Prostate gland (tissue), 2 donors: ENCODE measurements at regions of chr16 and their contacts with region 1.

Region 1: GRCh38 chr16:68396481-68396880 is 51.8 kb downstream of the SMPD3 start:
- DNase-seq: peak; percentile 50
- H3K4me3 ChIP-seq: no peak overlapping the region
- H3K27ac ChIP-seq: no peak overlapping the region
- H3K4me1 ChIP-seq: no peaks in the 10 kb centered on the region
- H3K27me3 ChIP-seq: no peaks in the 10 kb centered on the region
- CTCF ChIP-seq: peak; percentile 54 to 89 (median 78)
- POLR2A ChIP-seq: no peak

Region 2: GRCh38 chr16:67191995-67192681 is 1204.3 kb before region 1 on chr16 and contains the start of gene E2F4:
- intact Hi-C with region 1: no loop called
- DNase-seq: peak; percentile 89
- H3K4me3 ChIP-seq: peak within 1 kb of the TSS; percentile 88 to 91
- H3K27ac ChIP-seq: peak within 1 kb of the TSS; percentile 35 to 41
- H3K4me1 ChIP-seq: peaks cover 17% of the 10 kb centered on the region
- H3K27me3 ChIP-seq: no peaks in the 10 kb centered on the region
- CTCF ChIP-seq: peak in 2 of 4 experiments; percentile 30 to 40
- POLR2A ChIP-seq: peak; percentile 22
- total RNA-seq, gene E2F4: 91.6 to 105 TPM

Region 3: GRCh38 chr16:68166264-68166663 is 230.2 kb before region 1 on chr16:
- intact Hi-C with region 1: no loop called
- DNase-seq: no peak
- H3K4me3 ChIP-seq: no peak overlapping the region
- H3K27ac ChIP-seq: no peak overlapping the region
- H3K4me1 ChIP-seq: no peaks in the 10 kb centered on the region
- H3K27me3 ChIP-seq: no peaks in the 10 kb centered on the region
- CTCF ChIP-seq: no peak
- POLR2A ChIP-seq: no peak

Region 4: DNA sequence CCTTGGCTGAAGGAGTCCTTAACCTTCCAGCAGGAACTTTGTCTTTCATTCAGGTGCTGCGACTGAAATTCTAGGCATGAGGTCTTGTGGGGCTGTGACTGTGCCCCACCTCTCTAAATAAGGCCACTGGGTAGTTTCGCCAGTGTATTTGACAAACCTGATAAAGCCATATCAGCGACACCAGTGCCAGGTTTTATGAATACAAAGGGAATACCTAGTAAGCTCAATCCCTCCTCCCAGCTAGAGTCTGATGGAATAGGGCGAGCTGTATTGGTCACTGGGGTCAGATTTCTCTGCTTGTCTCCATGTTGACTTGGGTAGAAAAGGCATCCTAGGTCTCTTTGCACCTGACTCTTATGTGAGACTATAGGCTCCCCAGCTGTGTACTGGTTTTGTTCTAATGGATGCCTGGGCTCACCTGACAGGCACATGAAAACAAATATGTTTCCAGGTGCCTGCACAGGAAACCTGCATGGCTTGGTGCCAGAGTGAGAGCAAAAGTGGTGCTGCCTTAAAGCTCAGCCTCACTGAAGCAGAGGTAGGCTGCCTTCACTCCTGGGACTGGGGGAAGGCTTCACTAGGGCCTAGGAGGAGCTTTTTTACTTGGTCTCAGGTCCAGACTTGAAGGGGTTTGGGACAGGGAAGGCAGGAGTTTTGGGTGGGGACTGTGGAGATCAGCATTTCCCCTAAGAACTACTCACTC is 123.8 kb before region 1 on chr16:
- intact Hi-C with region 1: no loop called
- DNase-seq: peak; percentile 20
- H3K4me3 ChIP-seq: no peak overlapping the region
- H3K27ac ChIP-seq: no peak overlapping the region
- H3K4me1 ChIP-seq: peaks cover 2% of the 10 kb centered on the region
- H3K27me3 ChIP-seq: no peaks in the 10 kb centered on the region
- CTCF ChIP-seq: no peak
- POLR2A ChIP-seq: no peak

Region 5: GRCh38 chr16:68452176-68452575 is 55.7 kb after region 1 on chr16:
- intact Hi-C with region 1: no loop called
- DNase-seq: no peak
- H3K4me3 ChIP-seq: no peak overlapping the region
- H3K27ac ChIP-seq: no peak overlapping the region
- H3K4me1 ChIP-seq: peaks cover 8% of the 10 kb centered on the region
- H3K27me3 ChIP-seq: no peaks in the 10 kb centered on the region
- CTCF ChIP-seq: no peak
- POLR2A ChIP-seq: no peak

Region 6: GRCh38 chr16:68503334-68503733 is 106.9 kb after region 1 on chr16:
- intact Hi-C with region 1: loop called (anchors 10 kb)
- DNase-seq: no peak
- H3K4me3 ChIP-seq: no peak overlapping the region
- H3K27ac ChIP-seq: no peak overlapping the region
- H3K4me1 ChIP-seq: no peaks in the 10 kb centered on the region
- H3K27me3 ChIP-seq: no peaks in the 10 kb centered on the region
- CTCF ChIP-seq: no peak
- POLR2A ChIP-seq: no peak